ENCODE measurements at regions of chr6 and their contacts with region 1.

Region 1: DNA sequence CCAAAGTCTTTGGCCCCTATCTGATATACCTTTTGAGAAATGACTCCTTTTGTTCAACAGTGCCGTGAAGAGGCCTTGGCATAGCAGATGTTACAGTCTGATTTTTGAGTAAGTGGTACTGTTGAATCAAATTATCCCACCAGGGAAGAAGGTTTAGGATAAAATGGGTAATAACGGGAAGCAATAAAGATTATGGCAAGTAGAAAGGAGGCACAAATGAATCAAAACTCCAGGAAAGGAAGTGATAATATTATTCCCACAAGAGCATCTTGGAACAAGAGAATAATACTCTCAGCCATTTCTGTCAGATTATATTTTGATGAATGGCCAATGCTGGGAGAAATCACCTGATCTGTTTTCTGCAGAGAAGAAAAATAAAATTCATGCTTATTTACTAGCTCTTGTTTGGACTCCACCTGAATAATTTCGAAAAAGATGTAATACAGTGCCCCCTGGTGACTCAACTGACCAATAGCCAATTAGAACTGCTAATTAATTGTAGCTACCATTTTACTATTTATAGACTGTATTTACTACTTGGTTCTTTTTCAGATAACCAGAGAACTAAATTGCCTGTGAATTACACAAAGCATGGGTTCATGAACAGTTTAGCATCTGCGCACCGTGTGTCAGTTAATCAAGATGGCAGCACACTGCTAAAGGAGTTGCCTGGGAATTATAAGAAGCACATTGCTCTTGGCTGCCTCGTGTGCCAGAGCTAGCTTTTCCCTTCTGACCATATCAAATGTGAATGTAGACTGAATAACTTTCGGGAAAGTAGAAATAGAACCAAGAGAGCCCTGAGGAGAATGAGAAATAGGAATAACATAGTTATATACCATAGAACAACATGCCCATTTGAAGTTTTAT is 78.5 kb upstream of the TRDN start:
- DNase-seq: no peak
- ATAC-seq: peak; percentile 47
- H3K4me3 Mint-ChIP-seq: no peak overlapping the region
- H3K27ac Mint-ChIP-seq: no peak overlapping the region
- H3K4me1 Mint-ChIP-seq: peaks cover 3% of the 10 kb centered on the region
- H3K27me3 Mint-ChIP-seq: no peaks in the 10 kb centered on the region
- CTCF ChIP-seq: peak; percentile 20; the same call in 1 of the 2 replicates

Region 2: GRCh38 chr6:122869437-122870024 is 845.7 kb before region 1 on chr6:
- CTCF ChIA-PET with region 1: interaction called, 13 read pairs
- POLR2A ChIA-PET with region 1: no interaction called
- DNase-seq: peak; percentile 22
- ATAC-seq: peak; percentile 96
- H3K4me3 Mint-ChIP-seq: no peak overlapping the region
- H3K27ac Mint-ChIP-seq: no peak overlapping the region
- H3K4me1 Mint-ChIP-seq: peaks cover 15% of the 10 kb centered on the region
- H3K27me3 Mint-ChIP-seq: no peaks in the 10 kb centered on the region
- CTCF ChIP-seq: peak; percentile 50; the same call in 1 of the 2 replicates

Region 3: GRCh38 chr6:123393328-123393727 is 321.9 kb before region 1 on chr6:
- CTCF ChIA-PET with region 1: interaction called, 13 read pairs
- POLR2A ChIA-PET with region 1: no interaction called
- DNase-seq: no peak
- ATAC-seq: no peak
- H3K4me3 Mint-ChIP-seq: no peak overlapping the region
- H3K27ac Mint-ChIP-seq: no peak overlapping the region
- H3K4me1 Mint-ChIP-seq: peaks cover 8% of the 10 kb centered on the region; the same call in 1 of the 2 replicates
- H3K27me3 Mint-ChIP-seq: no peaks in the 10 kb centered on the region
- CTCF ChIP-seq: no peak

Region 4: GRCh38 chr6:123519191-123519510 is 196.1 kb before region 1 on chr6:
- CTCF ChIA-PET with region 1: interaction called, 10 read pairs
- POLR2A ChIA-PET with region 1: no interaction called
- DNase-seq: no peak
- ATAC-seq: no peak
- H3K4me3 Mint-ChIP-seq: no peak overlapping the region
- H3K27ac Mint-ChIP-seq: no peak overlapping the region
- H3K4me1 Mint-ChIP-seq: peaks cover 28% of the 10 kb centered on the region
- H3K27me3 Mint-ChIP-seq: no peaks in the 10 kb centered on the region
- CTCF ChIP-seq: no peak

Region 5: GRCh38 chr6:123676793-123677192 is 38.4 kb before region 1 on chr6:
- CTCF ChIA-PET with region 1: no interaction called
- POLR2A ChIA-PET with region 1: no interaction called
- DNase-seq: no peak
- ATAC-seq: no peak
- H3K4me3 Mint-ChIP-seq: no peak overlapping the region
- H3K27ac Mint-ChIP-seq: no peak overlapping the region
- H3K4me1 Mint-ChIP-seq: peaks cover 4% of the 10 kb centered on the region
- H3K27me3 Mint-ChIP-seq: no peaks in the 10 kb centered on the region; the same call in 1 of the 2 replicates
- CTCF ChIP-seq: no peak

Region 6: GRCh38 chr6:123802697-123803496 is 87.7 kb after region 1 on chr6:
- CTCF ChIA-PET with region 1: interaction called, 13 read pairs
- POLR2A ChIA-PET with region 1: no interaction called
- DNase-seq: peak; percentile 90
- ATAC-seq: peak; percentile 87
- H3K4me3 Mint-ChIP-seq: peak overlapping the region; percentile 82
- H3K27ac Mint-ChIP-seq: no peak overlapping the region
- H3K4me1 Mint-ChIP-seq: peaks cover 9% of the 10 kb centered on the region
- H3K27me3 Mint-ChIP-seq: peaks cover 63% of the 10 kb centered on the region
- CTCF ChIP-seq: peak; percentile 82

Region 7: DNA sequence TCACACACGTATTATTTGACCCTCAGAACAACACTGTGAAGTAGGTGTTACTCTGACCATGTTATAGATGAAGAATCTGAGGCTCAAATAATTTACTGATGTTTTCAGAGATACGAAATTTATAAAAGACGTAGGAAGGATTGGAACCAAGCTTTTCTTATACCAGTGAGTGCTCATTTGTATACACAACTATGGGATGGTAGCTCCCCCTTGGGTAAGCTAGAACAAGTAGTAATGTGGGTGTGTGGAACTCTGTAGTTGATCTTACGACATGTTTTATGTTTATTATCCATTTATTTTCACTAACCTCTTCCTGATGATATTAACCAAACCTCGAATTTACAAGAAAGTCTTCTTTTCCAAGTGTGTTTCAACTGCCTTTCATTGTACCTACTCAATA is 336.9 kb after region 1 on chr6:
- CTCF ChIA-PET with region 1: no interaction called
- POLR2A ChIA-PET with region 1: no interaction called
- DNase-seq: no peak
- ATAC-seq: no peak
- H3K4me3 Mint-ChIP-seq: no peak overlapping the region
- H3K27ac Mint-ChIP-seq: no peak overlapping the region
- H3K4me1 Mint-ChIP-seq: no peaks in the 10 kb centered on the region
- H3K27me3 Mint-ChIP-seq: no peaks in the 10 kb centered on the region
- CTCF ChIP-seq: no peak